Naive thymus-derived CD4-positive, alpha-beta T cell (primary cell): ENCODE measurements at regions of chr13 and their contacts with region 1.

Region 1: DNA sequence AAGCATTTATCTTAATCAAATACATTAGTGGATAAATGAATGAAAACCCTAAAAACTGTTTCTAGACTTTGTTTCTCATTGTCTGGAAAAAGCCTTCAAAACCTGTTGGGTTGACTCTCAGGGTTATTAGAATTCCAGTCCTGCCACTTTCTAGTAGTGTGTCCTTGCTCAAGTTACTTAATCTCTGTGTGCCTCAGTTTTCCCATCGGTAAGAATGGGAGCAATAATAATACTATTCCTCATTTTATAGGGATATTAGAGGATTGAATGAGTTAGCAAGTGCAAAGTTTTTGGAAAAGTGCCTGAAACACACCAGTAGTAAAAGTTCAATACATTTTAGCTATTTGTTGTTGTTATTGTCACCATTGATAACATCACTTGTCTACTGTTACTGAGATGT is 2.9 kb downstream of the URAD start:
- DNase-seq: no peak
- ATAC-seq: no peak
- H3K4me3 ChIP-seq: no peak overlapping the region
- H3K4me3 Mint-ChIP-seq: no peak overlapping the region
- H3K27ac ChIP-seq: no peak overlapping the region
- H3K27ac Mint-ChIP-seq: no peak overlapping the region
- H3K4me1 ChIP-seq: no peaks in the 10 kb centered on the region
- H3K4me1 Mint-ChIP-seq: peaks cover 0 to 10% (median 0%) of the 10 kb centered on the region in 7 donors
- H3K27me3 ChIP-seq: peaks cover 2 to 3% of the 10 kb centered on the region in 2 donors
- H3K27me3 Mint-ChIP-seq: peaks cover 41 to 62% (median 52%) of the 10 kb centered on the region in 5 donors

Region 2: GRCh38 chr13:27770809-27771208 is 214.8 kb before region 1 on chr13:
- CTCF ChIA-PET with region 1: no interaction called
- POLR2A ChIA-PET with region 1: no interaction called
- intact Hi-C with region 1: loop called in 1 of 2 experiments (anchors 2 kb)
- DNase-seq: peak in 1 of 9 donors; percentile 23
- ATAC-seq: no peak
- H3K4me3 ChIP-seq: no peak overlapping the region
- H3K4me3 Mint-ChIP-seq: no peak overlapping the region
- H3K27ac ChIP-seq: no peak overlapping the region
- H3K27ac Mint-ChIP-seq: no peak overlapping the region
- H3K4me1 ChIP-seq: no peaks in the 10 kb centered on the region
- H3K4me1 Mint-ChIP-seq: no peaks in the 10 kb centered on the region
- H3K27me3 ChIP-seq: no peaks in the 10 kb centered on the region
- H3K27me3 Mint-ChIP-seq: peaks cover 13 to 65% (median 43%) of the 10 kb centered on the region in 5 donors